ENCODE measurements at regions of chrX and their contacts with region 1.

Region 1: DNA sequence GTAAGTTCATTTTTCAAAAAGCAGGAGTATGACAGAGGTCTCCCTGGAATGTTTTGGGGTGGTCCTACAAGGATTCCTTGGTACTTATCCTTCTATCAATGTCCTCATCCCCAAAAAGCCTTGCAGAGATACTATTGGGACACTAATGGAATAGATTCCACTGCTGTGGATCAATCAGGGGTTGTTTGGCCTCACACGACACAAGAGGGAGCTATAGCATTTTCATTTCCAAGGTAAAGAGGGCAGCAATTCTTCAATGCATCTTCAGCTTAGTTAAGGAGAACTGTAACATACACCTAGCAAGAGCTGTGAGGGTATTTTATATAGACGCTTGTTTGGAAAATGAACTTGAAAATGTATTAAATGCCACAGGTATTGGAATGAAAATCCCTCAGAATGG is 50.9 kb downstream of the USP26 start:
- DNase-seq: no peak
- H3K4me3 ChIP-seq: no peak overlapping the region
- H3K27ac ChIP-seq: no peak overlapping the region
- H3K4me1 ChIP-seq: no peaks in the 10 kb centered on the region
- H3K27me3 ChIP-seq: no peaks in the 10 kb centered on the region
- CTCF ChIP-seq: peak; percentile 31

Region 2: GRCh38 chrX:132071260-132071659 is 974.7 kb before region 1 on chrX:
- intact Hi-C with region 1: no loop called
- DNase-seq: no peak
- H3K4me3 ChIP-seq: no peak overlapping the region
- H3K27ac ChIP-seq: no peak overlapping the region
- H3K4me1 ChIP-seq: no peaks in the 10 kb centered on the region
- H3K27me3 ChIP-seq: no peaks in the 10 kb centered on the region
- CTCF ChIP-seq: no peak

Region 3: GRCh38 chrX:132821974-132822633 is 223.9 kb before region 1 on chrX:
- intact Hi-C with region 1: no loop called
- DNase-seq: peak; percentile 19
- H3K4me3 ChIP-seq: no peak overlapping the region
- H3K27ac ChIP-seq: peak overlapping the region; percentile 52
- H3K4me1 ChIP-seq: no peaks in the 10 kb centered on the region
- H3K27me3 ChIP-seq: no peaks in the 10 kb centered on the region
- CTCF ChIP-seq: no peak

Region 4: DNA sequence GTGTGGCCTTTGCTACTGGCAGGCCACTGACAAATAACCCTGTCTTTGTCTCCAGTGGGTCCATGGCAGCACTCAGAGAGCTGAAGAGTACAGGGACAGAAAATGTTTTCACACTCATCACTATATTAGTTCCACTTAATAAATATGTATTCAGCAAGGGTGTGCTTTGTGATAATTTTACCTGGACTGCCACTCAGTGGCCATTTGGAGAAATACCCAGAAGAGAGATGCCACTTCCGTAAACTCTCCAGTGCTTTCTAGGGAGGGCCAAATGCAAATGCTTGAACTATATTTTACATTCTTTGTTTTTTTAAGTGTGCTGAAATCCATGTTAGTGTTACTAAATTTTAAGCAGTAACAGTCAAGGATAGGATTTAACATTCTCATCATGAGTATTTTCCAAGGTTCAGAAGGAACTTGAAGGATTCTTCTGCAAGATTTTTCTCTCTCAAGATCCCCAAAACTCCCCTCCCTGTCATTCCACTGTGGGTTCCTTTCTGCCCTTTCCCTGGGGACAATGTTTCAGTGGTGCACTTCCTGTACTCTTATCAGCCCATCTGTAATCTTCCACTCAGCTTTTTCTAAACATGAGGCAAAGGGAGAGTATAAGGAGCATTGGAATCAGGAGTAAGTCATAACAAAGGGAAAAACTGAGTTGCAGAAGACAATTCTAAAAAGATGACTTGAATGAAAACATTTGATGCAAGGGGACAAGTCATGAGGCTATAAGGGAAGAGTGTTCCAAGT is 126.1 kb after region 1 on chrX:
- intact Hi-C with region 1: loop called (anchors 5 kb)
- DNase-seq: peak; percentile 26
- H3K4me3 ChIP-seq: no peak overlapping the region
- H3K27ac ChIP-seq: no peak overlapping the region
- H3K4me1 ChIP-seq: no peaks in the 10 kb centered on the region
- H3K27me3 ChIP-seq: no peaks in the 10 kb centered on the region
- CTCF ChIP-seq: no peak